GM12878 (cell line): ENCODE measurements at regions of chr10 and their contacts with region 1.

Region 1: DNA sequence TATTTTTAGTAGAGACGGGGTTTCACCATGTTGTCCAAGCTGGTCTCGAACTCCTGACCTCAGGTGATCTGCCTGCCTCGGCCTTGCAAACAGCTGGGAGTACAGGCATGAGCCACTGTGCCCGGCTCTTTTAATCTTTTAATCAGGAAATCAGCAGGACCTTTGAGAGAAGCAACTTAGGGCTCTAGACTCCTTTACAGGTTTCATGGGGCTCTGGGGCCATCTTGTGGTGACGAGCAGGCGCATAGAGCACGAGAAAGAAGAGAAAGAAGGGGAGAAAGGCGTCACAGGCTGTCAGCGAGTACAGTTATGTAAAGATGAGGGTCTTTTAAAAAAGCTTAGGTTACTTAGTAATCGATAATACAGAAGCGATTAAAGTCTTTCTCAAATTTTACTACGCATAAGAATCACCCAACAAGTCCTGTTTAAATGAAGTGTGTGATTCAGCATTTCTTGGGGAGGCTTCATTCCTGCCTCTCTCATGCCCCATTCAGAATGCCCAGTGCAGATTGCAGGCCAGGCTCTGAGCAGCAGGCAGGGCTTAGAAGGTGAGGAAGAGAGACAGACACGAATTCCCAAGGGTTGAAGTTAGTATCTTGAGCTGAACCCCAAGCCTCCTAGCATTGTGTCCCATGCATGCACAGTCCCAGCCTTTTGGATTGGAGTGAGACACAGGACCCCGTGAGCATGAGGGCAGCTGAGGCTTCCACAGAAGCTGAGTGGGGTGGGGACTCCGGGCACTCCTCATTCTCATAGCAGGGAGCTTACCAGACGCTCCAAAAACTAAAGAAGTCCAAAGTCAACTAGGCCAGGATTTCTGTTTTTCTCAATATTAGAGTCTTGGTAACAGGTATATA is 23.6 kb upstream of the PFKP start:
- DNase-seq: no peak
- ATAC-seq: peak; percentile 85
- H3K4me3 ChIP-seq: no peak overlapping the region
- H3K27ac ChIP-seq: no peak overlapping the region
- H3K4me1 ChIP-seq: no peaks in the 10 kb centered on the region
- H3K27me3 ChIP-seq: 0 out of 4 replicates have a peak, but pooled peaks cover 0 to 2% of the 10 kb centered on the region in 2 experiments
- CTCF ChIP-seq: peak; percentile 73 to 87 (median 76)
- EP300 ChIP-seq: no peak
- POLR2A ChIP-seq: no peak
- RAD21 ChIP-seq: peak; percentile 97

Region 2: GRCh38 chr10:1754506-1755153 is 1289.1 kb before region 1 on chr10:
- CTCF ChIA-PET with region 1: interaction called, 4 read pairs
- POLR2A ChIA-PET with region 1: no interaction called
- RAD21 ChIA-PET with region 1: no interaction called
- SMC1A ChIA-PET with region 1: no interaction called
- in situ Hi-C with region 1: no loop called
- intact Hi-C with region 1: loop called (anchors 10 kb)
- DNase-seq: no peak
- ATAC-seq: no peak
- H3K4me3 ChIP-seq: no peak overlapping the region
- H3K27ac ChIP-seq: no peak overlapping the region
- H3K4me1 ChIP-seq: no peaks in the 10 kb centered on the region
- H3K27me3 ChIP-seq: peaks cover 0 to 4% of the 10 kb centered on the region in 2 experiments; a peak in 2 of 4 replicates
- CTCF ChIP-seq: no peak
- EP300 ChIP-seq: no peak
- POLR2A ChIP-seq: no peak
- RAD21 ChIP-seq: no peak

Region 3: GRCh38 chr10:2619472-2619871 is 424.3 kb before region 1 on chr10:
- CTCF ChIA-PET with region 1: interaction called, 6 read pairs
- POLR2A ChIA-PET with region 1: no interaction called
- RAD21 ChIA-PET with region 1: no interaction called
- SMC1A ChIA-PET with region 1: no interaction called
- in situ Hi-C with region 1: no loop called
- intact Hi-C with region 1: loop called (anchors 2 kb)
- DNase-seq: no peak
- ATAC-seq: peak; percentile 79
- H3K4me3 ChIP-seq: no peak overlapping the region
- H3K27ac ChIP-seq: no peak overlapping the region
- H3K4me1 ChIP-seq: no peaks in the 10 kb centered on the region
- H3K27me3 ChIP-seq: no peaks in the 10 kb centered on the region
- CTCF ChIP-seq: peak; percentile 33 to 64 (median 58); a peak in 5 of 6 replicates
- EP300 ChIP-seq: no peak
- POLR2A ChIP-seq: no peak
- RAD21 ChIP-seq: 0 out of 2 replicates have a peak, but pooled peaks have one; percentile 15

Region 4: GRCh38 chr10:2927958-2928840 is 115.5 kb before region 1 on chr10:
- CTCF ChIA-PET with region 1: interaction called, 96 read pairs
- POLR2A ChIA-PET with region 1: interaction called, 8 read pairs
- RAD21 ChIA-PET with region 1: interaction called, 53 read pairs
- SMC1A ChIA-PET with region 1: interaction called, 25 read pairs
- in situ Hi-C with region 1: loop called (anchors 5 kb)
- intact Hi-C with region 1: loop called (anchors 1 kb)
- DNase-seq: peak; percentile 54
- ATAC-seq: peak; percentile 98
- H3K4me3 ChIP-seq: no peak overlapping the region
- H3K27ac ChIP-seq: no peak overlapping the region
- H3K4me1 ChIP-seq: no peaks in the 10 kb centered on the region
- H3K27me3 ChIP-seq: peaks cover 3 to 5% of the 10 kb centered on the region in 2 experiments; a peak in 3 of 4 replicates
- CTCF ChIP-seq: peak; percentile 73 to 85 (median 74)
- EP300 ChIP-seq: no peak
- POLR2A ChIP-seq: no peak
- RAD21 ChIP-seq: peak; percentile 85

Region 5: DNA sequence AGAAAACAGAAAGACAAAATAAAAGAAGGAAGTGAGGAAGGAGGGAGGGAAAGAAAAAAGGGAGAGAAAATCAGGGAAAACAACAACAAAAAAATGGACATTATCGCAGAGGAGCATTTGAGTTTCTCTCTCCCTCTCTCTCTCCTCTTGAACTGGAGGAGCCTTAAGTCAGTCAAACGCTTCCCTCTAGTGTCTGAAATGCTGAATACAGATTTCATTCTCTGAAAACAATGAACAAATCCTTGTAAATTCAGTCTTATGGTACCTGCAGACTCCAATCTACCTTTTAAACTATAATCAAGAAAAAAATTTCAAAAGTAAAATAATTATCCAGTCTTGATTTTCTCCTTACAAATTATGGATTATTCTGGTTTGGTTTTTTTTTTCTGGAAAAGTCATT is 65.6 kb before region 1 on chr10:
- CTCF ChIA-PET with region 1: interaction called, 21 read pairs
- POLR2A ChIA-PET with region 1: no interaction called
- RAD21 ChIA-PET with region 1: interaction called, 4 read pairs
- SMC1A ChIA-PET with region 1: interaction called, 9 read pairs
- in situ Hi-C with region 1: no loop called
- intact Hi-C with region 1: loop called (anchors 5 kb)
- DNase-seq: peak; percentile 32
- ATAC-seq: peak; percentile 87
- H3K4me3 ChIP-seq: no peak overlapping the region
- H3K27ac ChIP-seq: no peak overlapping the region
- H3K4me1 ChIP-seq: peaks cover 8% of the 10 kb centered on the region
- H3K27me3 ChIP-seq: no peaks in the 10 kb centered on the region
- CTCF ChIP-seq: peak; percentile 45 to 78 (median 47); a peak in 5 of 6 replicates
- EP300 ChIP-seq: no peak
- POLR2A ChIP-seq: no peak
- RAD21 ChIP-seq: peak; percentile 84